MCF 10A (cell line): ENCODE measurements at regions of chr19 and their contacts with region 1.

Region 1: DNA sequence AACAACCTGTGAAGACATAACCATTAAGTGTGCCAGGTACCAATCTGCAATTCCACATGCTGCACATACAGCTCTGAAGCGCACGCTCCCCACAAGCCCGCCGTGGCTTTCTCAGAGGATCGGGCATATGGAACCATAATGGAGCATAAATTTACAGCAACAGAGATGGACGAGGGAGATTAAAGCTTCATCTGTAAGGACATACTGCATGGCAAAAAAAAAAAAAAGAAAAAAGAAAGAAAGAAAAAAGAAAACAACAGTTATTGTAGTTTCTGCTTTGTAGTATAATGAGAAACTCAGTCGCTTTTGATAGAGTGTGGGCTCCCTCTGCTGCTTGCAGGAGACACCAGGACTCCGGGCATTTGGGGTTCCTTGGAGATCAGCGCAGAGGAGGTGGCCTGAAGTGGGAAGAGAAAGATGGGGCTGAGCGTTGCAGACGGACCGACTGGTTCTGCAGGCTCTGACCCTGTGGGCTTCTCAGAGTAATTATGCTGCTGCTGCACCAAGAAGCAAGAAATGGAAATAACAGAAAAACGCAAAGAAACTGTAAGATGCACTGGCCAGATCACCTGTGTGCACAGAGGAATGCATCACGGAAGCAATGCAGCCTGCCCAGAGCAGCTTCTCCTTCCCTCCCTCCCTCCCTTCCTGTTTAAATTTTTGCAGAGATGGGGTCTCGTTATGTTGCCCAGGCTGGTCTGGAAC is 10.8 kb upstream of the PDCD5 start:
- DNase-seq: peak; percentile 79
- H3K4me3 Mint-ChIP-seq: peak overlapping the region; percentile 56
- H3K27ac Mint-ChIP-seq: no peak overlapping the region
- H3K4me1 Mint-ChIP-seq: peaks cover 8% of the 10 kb centered on the region
- H3K27me3 Mint-ChIP-seq: no peaks in the 10 kb centered on the region
- CTCF ChIP-seq: peak; percentile 97

Region 2: GRCh38 chr19:30669329-30670010 is 1900.8 kb before region 1 on chr19:
- CTCF ChIA-PET with region 1: interaction called, 51 read pairs
- POLR2A ChIA-PET with region 1: no interaction called
- intact Hi-C with region 1: loop called (anchors 1 kb)
- DNase-seq: peak; percentile 55
- H3K4me3 Mint-ChIP-seq: no peak overlapping the region
- H3K27ac Mint-ChIP-seq: no peak overlapping the region
- H3K4me1 Mint-ChIP-seq: no peaks in the 10 kb centered on the region
- H3K27me3 Mint-ChIP-seq: peaks cover 29% of the 10 kb centered on the region
- CTCF ChIP-seq: peak; percentile 65

Region 3: GRCh38 chr19:32339988-32340874 is 230.0 kb before region 1 on chr19:
- CTCF ChIA-PET with region 1: interaction called, 93 read pairs
- POLR2A ChIA-PET with region 1: interaction called, 4 read pairs
- intact Hi-C with region 1: loop called (anchors 1 kb)
- DNase-seq: peak; percentile 50
- H3K4me3 Mint-ChIP-seq: no peak overlapping the region
- H3K27ac Mint-ChIP-seq: no peak overlapping the region
- H3K4me1 Mint-ChIP-seq: peaks cover 6% of the 10 kb centered on the region
- H3K27me3 Mint-ChIP-seq: no peaks in the 10 kb centered on the region
- CTCF ChIP-seq: peak; percentile 55

Region 4: GRCh38 chr19:32421589-32422361 is 148.5 kb before region 1 on chr19:
- CTCF ChIA-PET with region 1: no interaction called
- POLR2A ChIA-PET with region 1: no interaction called
- intact Hi-C with region 1: no loop called
- DNase-seq: no peak
- H3K4me3 Mint-ChIP-seq: no peak overlapping the region
- H3K27ac Mint-ChIP-seq: peak overlapping the region; percentile 5
- H3K4me1 Mint-ChIP-seq: no peaks in the 10 kb centered on the region
- H3K27me3 Mint-ChIP-seq: no peaks in the 10 kb centered on the region
- CTCF ChIP-seq: no peak

Region 5: DNA sequence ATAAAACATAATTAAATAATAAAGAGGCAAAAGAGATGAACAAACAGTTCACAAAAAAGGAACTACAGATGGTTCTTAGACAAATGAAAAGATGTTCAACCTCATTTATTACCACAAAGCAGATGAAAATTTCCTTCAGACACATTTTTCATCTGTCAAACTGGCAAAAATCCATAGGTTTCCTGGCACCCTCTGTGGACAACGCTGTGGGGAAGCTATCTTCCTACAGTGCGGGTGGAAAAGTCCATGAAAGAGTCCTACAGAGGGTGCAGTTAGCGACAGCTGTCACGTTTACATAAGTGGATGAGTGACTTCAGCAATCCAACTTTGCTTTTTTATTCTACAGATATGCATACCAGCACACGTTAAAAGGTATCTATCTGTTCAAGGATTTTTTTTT is 19.6 kb before region 1 on chr19:
- CTCF ChIA-PET with region 1: interaction called, 26 read pairs
- POLR2A ChIA-PET with region 1: no interaction called
- intact Hi-C with region 1: no loop called
- DNase-seq: no peak
- H3K4me3 Mint-ChIP-seq: no peak overlapping the region
- H3K27ac Mint-ChIP-seq: no peak overlapping the region
- H3K4me1 Mint-ChIP-seq: no peaks in the 10 kb centered on the region
- H3K27me3 Mint-ChIP-seq: no peaks in the 10 kb centered on the region
- CTCF ChIP-seq: no peak

Region 6: GRCh38 chr19:32580901-32581703 is 10.9 kb after region 1 on chr19 and contains the start of gene PDCD5:
- CTCF ChIA-PET with region 1: interaction called, 21 read pairs
- POLR2A ChIA-PET with region 1: interaction called, 5 read pairs
- intact Hi-C with region 1: no loop called
- DNase-seq: peak; percentile 95
- H3K4me3 Mint-ChIP-seq: peak within 1 kb of the TSS; percentile 90
- H3K27ac Mint-ChIP-seq: peak within 1 kb of the TSS; percentile 83
- H3K4me1 Mint-ChIP-seq: peaks cover 7% of the 10 kb centered on the region
- H3K27me3 Mint-ChIP-seq: no peaks in the 10 kb centered on the region
- CTCF ChIP-seq: no peak
- total RNA-seq, gene PDCD5: 261 and 290 TPM in 2 replicates